ENCODE measurements at regions of chr1 and their contacts with region 1.

Region 1: DNA sequence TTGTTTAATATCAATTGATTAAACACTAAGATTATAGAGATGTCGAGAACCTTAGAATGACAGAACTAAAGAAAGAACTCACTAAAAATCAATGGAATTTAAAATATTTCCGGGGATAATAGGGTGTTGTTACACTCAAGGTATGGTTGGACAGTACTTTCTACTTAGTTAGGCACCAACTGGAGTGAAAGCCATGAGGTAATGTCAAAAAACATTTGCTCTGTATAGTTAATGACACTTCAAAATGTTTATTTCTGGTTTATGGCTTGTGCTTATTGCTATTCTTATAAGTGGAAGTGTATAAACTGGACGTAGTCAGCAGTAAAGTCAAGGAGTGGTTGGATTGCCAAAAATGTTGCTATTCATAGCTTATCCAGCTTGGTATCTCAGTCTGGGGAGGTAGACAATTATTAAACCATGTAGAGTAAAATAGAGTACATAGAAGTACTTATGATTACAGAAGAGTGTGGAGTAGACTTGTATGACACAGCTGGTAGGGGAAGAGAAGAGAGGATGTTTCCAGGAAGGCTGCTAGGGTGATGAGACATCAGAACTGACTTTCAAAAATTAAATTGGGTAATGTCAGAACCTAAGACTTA is 56.5 kb upstream of the BMP8A start:
- DNase-seq: peak; percentile 47
- ATAC-seq: peak; percentile 44
- H3K4me3 ChIP-seq: no peak overlapping the region
- H3K27ac ChIP-seq: no peak overlapping the region
- H3K4me1 ChIP-seq: peaks cover 8% of the 10 kb centered on the region
- H3K27me3 ChIP-seq: no peaks in the 10 kb centered on the region
- CTCF ChIP-seq: no peak
- POLR2A ChIP-seq: no peak
- RAD21 ChIP-seq: no peak

Region 2: DNA sequence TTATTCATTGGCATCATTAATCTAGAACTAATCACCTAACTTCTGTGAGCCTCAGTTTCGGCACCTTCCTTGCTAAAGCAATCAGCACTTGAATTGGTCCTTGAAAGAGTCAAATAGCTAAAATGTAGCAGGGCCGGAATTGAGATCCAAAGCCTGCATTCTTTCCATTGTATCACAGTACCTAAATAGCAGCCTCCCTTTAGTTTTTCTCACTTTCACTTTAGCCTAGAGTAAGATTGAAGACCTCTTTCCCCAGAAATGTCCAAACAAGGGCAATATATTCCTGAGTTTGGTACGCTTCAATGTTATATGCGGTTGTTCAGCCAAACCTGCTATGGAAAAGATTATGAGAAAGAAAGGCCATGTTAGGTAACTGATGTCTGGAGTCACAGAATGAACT is 65.3 kb before region 1 on chr1:
- CTCF ChIA-PET with region 1: no interaction called
- POLR2A ChIA-PET with region 1: no interaction called
- dilution Hi-C with region 1: no loop called
- in situ Hi-C with region 1: no loop called
- intact Hi-C with region 1: loop called (anchors 5 kb)
- DNase-seq: no peak
- ATAC-seq: no peak
- H3K4me3 ChIP-seq: no peak overlapping the region
- H3K27ac ChIP-seq: no peak overlapping the region
- H3K4me1 ChIP-seq: 0 out of 2 replicates have a peak, but pooled peaks cover 1% of the 10 kb centered on the region
- H3K27me3 ChIP-seq: no peaks in the 10 kb centered on the region
- CTCF ChIP-seq: no peak
- POLR2A ChIP-seq: no peak
- RAD21 ChIP-seq: no peak

Region 3: GRCh38 chr1:39420493-39420892 is 14.4 kb before region 1 on chr1:
- CTCF ChIA-PET with region 1: interaction called, 5 read pairs
- POLR2A ChIA-PET with region 1: no interaction called
- dilution Hi-C with region 1: no loop called
- in situ Hi-C with region 1: no loop called
- intact Hi-C with region 1: loop called (anchors 2 kb)
- DNase-seq: no peak
- ATAC-seq: no peak
- H3K4me3 ChIP-seq: no peak overlapping the region
- H3K27ac ChIP-seq: no peak overlapping the region
- H3K4me1 ChIP-seq: peaks cover 3% of the 10 kb centered on the region; the same call in 1 of the 2 replicates
- H3K27me3 ChIP-seq: no peaks in the 10 kb centered on the region
- CTCF ChIP-seq: no peak
- POLR2A ChIP-seq: no peak
- RAD21 ChIP-seq: no peak

Measured in IMR-90 (cell line).